GM13976 (cell line): ENCODE measurements at regions of chr5 and their contacts with region 1.

Region 1: GRCh38 chr5:52948418-52949076 is 40.6 kb upstream of the ITGA2 start:
- DNase-seq: peak; percentile 59
- CTCF ChIP-seq: peak; percentile 57

Region 2: DNA sequence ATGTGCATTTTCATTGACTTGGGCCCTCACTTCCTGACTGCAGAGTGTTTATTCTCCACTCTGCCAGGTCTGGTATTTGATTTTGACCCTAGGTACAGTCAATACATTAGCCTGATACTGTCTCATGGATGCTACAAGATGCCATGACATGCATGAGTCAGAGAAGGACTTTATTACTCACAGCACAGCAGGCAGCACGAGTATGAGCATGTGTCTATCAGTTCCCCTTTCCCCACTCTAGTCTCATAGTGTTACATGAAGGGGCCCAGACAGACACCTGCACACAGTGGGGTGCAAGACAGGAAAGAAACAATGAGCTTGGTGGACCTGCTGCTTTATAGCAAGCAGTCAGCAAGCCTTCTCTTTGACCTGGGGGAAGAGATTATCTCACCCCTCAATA is 60.2 kb after region 1 on chr5:
- in situ Hi-C with region 1: no loop called
- DNase-seq: peak; percentile 20
- CTCF ChIP-seq: no peak

Region 3: GRCh38 chr5:53095931-53096525 is 147.5 kb after region 1 on chr5:
- in situ Hi-C with region 1: loop called (anchors 5 kb)
- DNase-seq: peak; percentile 34
- CTCF ChIP-seq: peak; percentile 67